ENCODE measurements at regions of chr14 and their contacts with region 1.

Region 1: DNA sequence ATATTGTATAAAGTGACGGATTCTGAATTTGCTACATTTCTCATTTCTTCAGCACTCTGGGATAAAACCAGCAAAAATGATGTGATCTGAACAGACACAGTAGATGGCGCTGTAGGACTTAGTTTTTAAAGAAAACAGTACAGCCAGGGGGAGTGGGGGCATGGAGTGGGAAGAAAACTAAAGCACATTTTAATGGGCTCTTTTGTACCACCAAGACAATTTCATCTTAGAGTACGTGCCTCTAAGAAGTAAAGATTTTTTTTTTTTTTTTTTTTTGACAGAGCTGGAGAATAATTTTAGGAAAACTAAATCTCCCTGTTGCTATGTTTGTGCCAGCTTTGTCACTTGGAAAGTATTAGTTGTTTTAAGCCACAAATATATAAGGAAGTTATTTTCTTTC is 124.4 kb downstream of the RAD51B start:
- DNase-seq: peak; percentile 93
- ATAC-seq: peak; percentile 29; the same call in 1 of the 2 replicates
- H3K4me3 ChIP-seq: no peak overlapping the region
- H3K27ac ChIP-seq: 0 out of 2 replicates have a peak overlapping the region, but pooled peaks have one; percentile 1
- H3K4me1 ChIP-seq: peaks cover 34% of the 10 kb centered on the region
- H3K27me3 ChIP-seq: no peaks in the 10 kb centered on the region
- CTCF ChIP-seq: peak; percentile 96

Region 2: GRCh38 chr14:67911562-67911961 is 32.4 kb before region 1 on chr14:
- CTCF ChIA-PET with region 1: no interaction called
- POLR2A ChIA-PET with region 1: no interaction called
- intact Hi-C with region 1: no loop called
- DNase-seq: no peak
- ATAC-seq: peak; percentile 37
- H3K4me3 ChIP-seq: no peak overlapping the region
- H3K27ac ChIP-seq: no peak overlapping the region
- H3K4me1 ChIP-seq: no peaks in the 10 kb centered on the region
- H3K27me3 ChIP-seq: no peaks in the 10 kb centered on the region
- CTCF ChIP-seq: no peak

Region 3: GRCh38 chr14:68016255-68016914 is 72.4 kb after region 1 on chr14:
- CTCF ChIA-PET with region 1: interaction called, 7 read pairs
- POLR2A ChIA-PET with region 1: no interaction called
- intact Hi-C with region 1: loop called (anchors 2 kb)
- DNase-seq: no peak
- ATAC-seq: peak; percentile 44
- H3K4me3 ChIP-seq: no peak overlapping the region
- H3K27ac ChIP-seq: no peak overlapping the region
- H3K4me1 ChIP-seq: peaks cover 28% of the 10 kb centered on the region
- H3K27me3 ChIP-seq: no peaks in the 10 kb centered on the region
- CTCF ChIP-seq: no peak

Region 4: GRCh38 chr14:68099495-68100045 is 155.6 kb after region 1 on chr14:
- CTCF ChIA-PET with region 1: no interaction called
- POLR2A ChIA-PET with region 1: no interaction called
- intact Hi-C with region 1: no loop called
- DNase-seq: no peak
- ATAC-seq: no peak
- H3K4me3 ChIP-seq: no peak overlapping the region
- H3K27ac ChIP-seq: no peak overlapping the region
- H3K4me1 ChIP-seq: peaks cover under 1% of the 10 kb centered on the region; the same call in 1 of the 2 replicates
- H3K27me3 ChIP-seq: no peaks in the 10 kb centered on the region
- CTCF ChIP-seq: no peak

Region 5: GRCh38 chr14:68164711-68165113 is 220.8 kb after region 1 on chr14:
- CTCF ChIA-PET with region 1: no interaction called
- POLR2A ChIA-PET with region 1: no interaction called
- intact Hi-C with region 1: loop called (anchors 2 kb)
- DNase-seq: peak; percentile 54
- ATAC-seq: peak; percentile 75
- H3K4me3 ChIP-seq: no peak overlapping the region
- H3K27ac ChIP-seq: peak overlapping the region; percentile 72
- H3K4me1 ChIP-seq: peaks cover 21% of the 10 kb centered on the region
- H3K27me3 ChIP-seq: no peaks in the 10 kb centered on the region
- CTCF ChIP-seq: no peak

Region 6: DNA sequence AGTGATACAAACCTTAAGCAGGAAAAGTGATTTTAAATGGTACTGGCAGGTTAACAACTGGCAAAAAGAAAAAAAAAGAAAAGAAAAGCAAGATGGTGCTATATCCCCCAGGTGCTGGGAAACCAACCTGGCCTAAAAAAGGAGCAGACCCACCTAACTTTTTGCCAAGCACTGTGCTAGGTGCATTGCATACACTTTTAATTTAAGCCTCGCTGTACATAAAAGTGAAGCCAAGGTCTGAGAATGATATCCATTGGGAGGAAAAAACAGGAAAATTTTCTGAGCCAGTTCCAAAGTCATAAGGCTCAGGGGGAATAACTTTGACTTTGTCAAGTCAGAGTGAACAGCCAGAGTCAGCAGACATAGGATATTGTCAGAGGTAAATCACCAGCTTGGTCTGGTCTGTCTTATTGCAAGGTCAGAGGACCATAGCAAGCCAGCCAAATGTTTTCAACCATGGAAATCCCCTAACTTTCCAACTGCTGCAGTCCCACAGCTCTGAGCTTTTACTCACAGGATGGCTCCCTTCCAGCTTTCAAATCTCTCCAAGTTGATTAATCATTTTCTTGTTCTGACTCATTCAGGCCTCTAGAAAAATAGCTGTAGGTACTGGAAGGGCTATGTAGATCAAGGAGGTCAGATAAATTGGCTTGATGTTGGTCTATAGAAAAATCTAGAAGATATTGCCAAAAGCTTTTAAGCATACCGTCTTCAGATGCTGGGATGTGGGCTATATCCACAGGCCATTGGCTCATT is 288.5 kb after region 1 on chr14:
- CTCF ChIA-PET with region 1: no interaction called
- POLR2A ChIA-PET with region 1: no interaction called
- intact Hi-C with region 1: loop called (anchors 1 kb)
- DNase-seq: peak; percentile 99
- ATAC-seq: peak; percentile 87
- H3K4me3 ChIP-seq: peak overlapping the region; percentile 44
- H3K27ac ChIP-seq: peak overlapping the region; percentile 97
- H3K4me1 ChIP-seq: peaks cover 53% of the 10 kb centered on the region
- H3K27me3 ChIP-seq: no peaks in the 10 kb centered on the region
- CTCF ChIP-seq: no peak

Region 7: GRCh38 chr14:68444449-68445168 is 500.7 kb after region 1 on chr14:
- CTCF ChIA-PET with region 1: no interaction called
- POLR2A ChIA-PET with region 1: no interaction called
- intact Hi-C with region 1: loop called (anchors 5 kb)
- DNase-seq: peak; percentile 64
- ATAC-seq: peak; percentile 44
- H3K4me3 ChIP-seq: no peak overlapping the region
- H3K27ac ChIP-seq: no peak overlapping the region
- H3K4me1 ChIP-seq: peaks cover 42% of the 10 kb centered on the region
- H3K27me3 ChIP-seq: no peaks in the 10 kb centered on the region
- CTCF ChIP-seq: no peak

Region 8: DNA sequence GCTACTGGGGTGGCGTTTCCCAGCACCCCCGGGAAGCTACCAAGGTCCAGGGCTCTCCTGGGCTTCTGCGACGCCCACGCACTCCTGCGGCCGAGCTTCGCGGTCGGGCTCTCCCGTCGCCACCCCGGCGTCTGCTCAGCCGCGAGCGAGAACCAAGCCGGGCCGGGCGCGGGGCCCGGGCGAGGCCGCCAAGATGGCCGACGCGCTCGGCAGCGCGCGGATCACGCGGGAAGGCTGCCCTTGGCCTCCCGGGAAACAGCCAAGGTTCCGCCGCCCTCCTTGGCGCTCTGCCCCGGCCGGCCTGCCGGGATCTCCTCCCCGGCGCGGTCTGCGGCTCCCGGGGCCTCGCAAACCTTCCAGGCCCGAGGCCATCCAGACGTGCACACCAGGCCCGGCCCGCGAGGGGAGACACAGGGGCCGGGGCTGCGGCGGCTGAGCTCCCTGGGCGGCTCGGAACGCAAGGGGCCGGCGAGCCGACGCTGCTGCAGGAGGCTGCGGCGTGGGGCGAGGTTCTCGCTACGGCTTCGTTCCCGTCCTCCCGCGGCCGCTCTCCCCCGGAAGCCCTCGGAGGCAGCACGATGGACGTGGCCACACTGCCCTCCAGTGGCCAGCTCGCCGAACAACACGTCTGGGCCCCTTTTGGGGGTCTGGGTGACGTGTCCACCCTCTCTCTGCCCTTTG is 872.5 kb after region 1 on chr14:
- CTCF ChIA-PET with region 1: interaction called, 5 read pairs
- POLR2A ChIA-PET with region 1: no interaction called
- intact Hi-C with region 1: loop called (anchors 2 kb)
- DNase-seq: peak; percentile 92
- ATAC-seq: peak; percentile 90
- H3K4me3 ChIP-seq: peak overlapping the region; percentile 60
- H3K27ac ChIP-seq: peak overlapping the region; percentile 83
- H3K4me1 ChIP-seq: peaks cover 22% of the 10 kb centered on the region
- H3K27me3 ChIP-seq: no peaks in the 10 kb centered on the region
- CTCF ChIP-seq: peak; percentile 97